ENCODE measurements at regions of chr18 and their contacts with region 1.

Region 1: GRCh38 chr18:9971313-9971920 is 57.6 kb downstream of the VAPA start:
- DNase-seq: peak; percentile 93
- ATAC-seq: peak; percentile 84
- H3K4me3 ChIP-seq: no peak overlapping the region
- H3K27ac ChIP-seq: no peak overlapping the region
- H3K4me1 ChIP-seq: no peaks in the 10 kb centered on the region
- H3K27me3 ChIP-seq: no peaks in the 10 kb centered on the region
- CTCF ChIP-seq: peak; percentile 93

Region 2: DNA sequence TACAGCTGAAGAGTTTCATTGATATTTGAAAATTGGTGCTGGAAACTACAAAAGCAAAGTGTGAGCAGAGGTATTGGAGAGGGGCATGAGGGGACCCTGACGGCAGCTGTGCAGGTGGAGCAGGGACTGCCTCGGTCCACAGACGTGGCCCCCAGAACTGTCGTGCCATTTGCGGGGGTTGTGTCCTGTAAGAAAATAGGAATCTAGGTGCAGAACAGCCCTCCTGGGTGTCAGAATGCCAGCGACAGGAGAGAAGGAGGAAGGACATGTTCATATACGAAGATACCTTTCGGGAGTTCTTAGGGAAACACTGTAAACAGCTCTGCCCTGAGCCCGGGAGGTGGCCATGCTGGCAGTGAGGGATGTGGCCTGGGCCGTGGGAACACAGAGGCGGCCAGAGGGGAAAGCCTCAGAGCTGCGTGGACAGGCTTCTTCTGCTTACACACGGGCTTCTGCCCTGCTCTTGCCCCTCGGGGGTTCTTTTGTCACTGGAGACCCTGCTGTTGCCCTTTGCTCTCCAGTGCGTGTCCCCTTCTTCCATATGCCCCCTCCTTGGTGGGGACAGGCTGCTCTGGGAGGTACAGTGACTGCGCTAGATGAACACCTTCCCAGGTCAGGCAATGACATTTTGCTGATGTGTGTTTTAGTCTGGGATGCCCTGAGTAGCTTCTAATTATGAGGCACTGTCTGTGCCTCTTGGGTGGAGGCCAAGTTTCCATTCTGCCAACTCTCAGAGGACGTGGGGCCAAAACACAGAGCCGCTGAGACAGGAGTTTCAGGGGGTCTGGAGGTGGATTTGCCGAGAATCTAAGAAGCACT is 167.5 kb before region 1 on chr18:
- CTCF ChIA-PET with region 1: no interaction called
- POLR2A ChIA-PET with region 1: no interaction called
- intact Hi-C with region 1: no loop called
- DNase-seq: peak; percentile 19
- ATAC-seq: peak; percentile 18
- H3K4me3 ChIP-seq: no peak overlapping the region; the same call in 1 of the 2 replicates
- H3K27ac ChIP-seq: no peak overlapping the region
- H3K4me1 ChIP-seq: peaks cover 8% of the 10 kb centered on the region
- H3K27me3 ChIP-seq: no peaks in the 10 kb centered on the region
- CTCF ChIP-seq: no peak

Region 3: DNA sequence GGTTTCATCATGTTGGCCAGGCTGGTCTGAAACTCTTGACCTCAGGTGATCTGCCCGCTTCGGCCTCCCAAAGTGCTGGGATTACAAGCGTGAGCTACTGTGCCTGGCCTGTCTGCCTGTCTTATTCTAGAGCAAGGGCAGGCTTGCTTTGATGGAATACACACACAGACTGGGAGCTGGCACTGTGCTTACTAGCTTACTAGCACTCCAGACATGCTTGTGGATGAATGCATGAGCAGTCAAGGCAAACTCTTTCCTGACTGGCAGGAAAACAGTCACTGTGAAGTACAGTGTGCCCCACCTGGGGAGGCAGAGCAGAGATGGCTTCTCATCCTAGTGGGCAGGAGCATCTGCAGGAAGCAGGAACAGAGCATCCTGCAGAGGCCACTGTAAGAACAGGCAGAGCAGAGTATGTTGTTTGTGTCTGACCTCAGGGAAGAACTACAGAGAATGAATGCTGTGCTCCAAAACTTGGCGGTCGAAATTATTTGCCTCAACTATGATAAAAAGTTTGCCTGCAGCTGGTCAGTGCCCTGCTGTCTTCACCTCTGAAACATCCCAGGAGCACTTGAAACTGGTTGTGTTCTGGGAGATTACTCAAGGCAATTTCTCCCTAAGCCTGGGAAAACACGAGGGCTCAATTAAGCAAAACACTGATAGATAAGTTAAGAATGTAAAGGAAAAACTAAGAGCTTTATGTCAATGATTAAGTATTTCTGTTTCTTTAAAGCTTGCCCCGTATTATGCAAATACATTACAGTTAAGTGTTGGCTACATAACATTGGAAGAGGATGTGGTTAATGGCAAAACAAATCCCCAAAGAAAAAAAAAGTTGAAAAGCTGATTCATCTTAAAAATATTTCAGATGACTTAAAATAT is 44.8 kb after region 1 on chr18:
- CTCF ChIA-PET with region 1: no interaction called
- POLR2A ChIA-PET with region 1: no interaction called
- intact Hi-C with region 1: no loop called
- DNase-seq: peak; percentile 63
- ATAC-seq: peak; percentile 66
- H3K4me3 ChIP-seq: no peak overlapping the region
- H3K27ac ChIP-seq: 0 out of 2 replicates have a peak overlapping the region, but pooled peaks have one; percentile 2
- H3K4me1 ChIP-seq: peaks cover 31% of the 10 kb centered on the region
- H3K27me3 ChIP-seq: peaks cover 12% of the 10 kb centered on the region; the same call in 1 of the 2 replicates
- CTCF ChIP-seq: peak; percentile 44; the same call in 1 of the 2 replicates

Region 4: DNA sequence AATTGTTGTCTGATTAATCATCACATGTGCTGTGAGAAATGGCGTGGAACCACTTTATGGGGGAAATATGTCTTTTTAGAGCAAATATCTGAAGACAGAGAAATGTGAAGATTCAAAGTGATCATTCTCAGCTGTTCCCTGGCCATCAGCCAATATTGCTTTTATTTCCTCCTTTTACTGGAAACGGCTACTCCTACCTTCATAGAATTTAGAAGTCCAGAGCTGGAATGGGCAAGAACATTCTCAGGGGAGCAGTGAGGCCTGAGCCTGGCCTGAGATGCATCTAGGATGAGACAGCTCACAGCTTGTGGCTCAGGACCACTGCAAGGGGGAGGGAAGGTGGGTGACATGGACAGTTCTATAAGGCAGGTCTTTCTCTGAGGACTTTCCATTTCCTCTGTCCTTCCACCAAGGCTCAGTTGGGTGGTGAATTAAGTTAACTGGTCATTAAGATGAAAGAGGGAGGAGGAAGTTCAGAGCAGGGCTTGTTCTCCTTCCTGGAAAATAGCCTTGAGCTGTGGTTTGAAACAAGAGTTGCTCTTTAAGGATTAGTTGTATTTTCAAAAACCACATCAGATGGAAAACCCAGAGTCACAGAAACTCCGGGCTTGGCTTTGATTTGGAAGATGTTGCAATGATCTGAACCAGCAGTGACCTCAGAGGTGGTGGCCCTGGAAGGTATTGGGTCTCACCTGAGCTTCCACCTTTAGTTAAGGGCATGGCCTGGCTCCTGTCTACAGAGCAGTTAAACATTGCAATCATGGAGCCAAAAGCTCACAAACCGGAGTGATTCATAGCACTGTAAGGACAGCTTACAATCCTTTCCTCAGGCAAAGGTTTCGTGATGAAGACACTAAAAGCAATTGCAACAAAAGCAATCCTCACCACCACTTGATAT is 86.7 kb after region 1 on chr18:
- CTCF ChIA-PET with region 1: no interaction called
- POLR2A ChIA-PET with region 1: no interaction called
- intact Hi-C with region 1: no loop called
- DNase-seq: peak; percentile 70
- ATAC-seq: peak; percentile 64
- H3K4me3 ChIP-seq: no peak overlapping the region
- H3K27ac ChIP-seq: peak overlapping the region; percentile 84
- H3K4me1 ChIP-seq: peaks cover 21% of the 10 kb centered on the region
- H3K27me3 ChIP-seq: 0 out of 2 replicates have a peak, but pooled peaks cover 5% of the 10 kb centered on the region
- CTCF ChIP-seq: no peak

Region 5: DNA sequence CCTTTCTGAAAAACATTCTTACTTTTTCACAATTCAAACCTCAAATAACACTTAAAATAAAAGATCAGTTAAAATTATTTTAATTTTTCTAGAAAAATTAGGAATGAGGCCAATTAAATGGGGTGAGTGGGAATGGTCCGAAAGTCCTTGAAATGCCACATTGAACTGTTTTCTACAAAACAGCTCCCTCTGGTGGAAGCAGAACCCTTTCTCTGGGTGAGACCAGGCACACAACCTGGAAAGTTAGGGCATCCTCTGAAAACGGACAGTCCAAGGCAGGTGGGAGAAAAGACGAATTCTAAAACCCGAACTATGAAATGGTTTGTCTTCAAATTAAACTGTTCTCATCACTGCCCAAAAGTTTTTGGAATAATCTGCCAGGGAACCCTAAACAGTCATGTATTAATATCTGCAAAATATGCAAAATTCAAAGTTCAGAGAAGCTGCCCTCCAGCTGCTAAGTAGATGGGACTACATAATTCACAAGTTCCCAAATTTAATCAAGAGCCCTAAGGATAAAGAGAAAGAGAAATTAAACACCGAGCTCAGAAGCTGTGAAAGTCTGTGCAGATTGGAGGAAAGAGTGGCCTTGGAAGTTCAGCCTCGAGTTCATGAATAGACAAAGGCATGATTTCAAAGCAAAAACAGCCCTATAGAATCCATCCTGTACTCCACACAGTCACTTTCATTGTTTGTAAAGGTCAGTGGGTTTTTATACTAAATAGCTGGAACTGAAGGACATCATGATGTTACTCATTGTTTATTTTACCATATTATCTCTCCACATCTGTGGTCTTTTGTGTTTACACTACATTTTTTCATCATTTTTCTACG is 1069.6 kb after region 1 on chr18:
- CTCF ChIA-PET with region 1: interaction called, 3 read pairs
- POLR2A ChIA-PET with region 1: no interaction called
- intact Hi-C with region 1: loop called (anchors 5 kb)
- DNase-seq: peak; percentile 65
- ATAC-seq: peak; percentile 74
- H3K4me3 ChIP-seq: no peak overlapping the region
- H3K27ac ChIP-seq: no peak overlapping the region
- H3K4me1 ChIP-seq: no peaks in the 10 kb centered on the region
- H3K27me3 ChIP-seq: peaks cover 53% of the 10 kb centered on the region
- CTCF ChIP-seq: peak; percentile 80

Measured in PC-3 (cell line).